Sciatic nerve (tissue), 2 donors: ENCODE measurements at regions of chr14 and their contacts with region 1.

Region 1: GRCh38 chr14:65772921-65773574 is 360.5 kb downstream of the FUT8 start:
- DNase-seq: no peak
- ATAC-seq: no peak

Region 2: GRCh38 chr14:65650826-65651225 is 122.2 kb before region 1 on chr14:
- intact Hi-C with region 1: no loop called
- DNase-seq: no peak
- ATAC-seq: no peak

Region 3: DNA sequence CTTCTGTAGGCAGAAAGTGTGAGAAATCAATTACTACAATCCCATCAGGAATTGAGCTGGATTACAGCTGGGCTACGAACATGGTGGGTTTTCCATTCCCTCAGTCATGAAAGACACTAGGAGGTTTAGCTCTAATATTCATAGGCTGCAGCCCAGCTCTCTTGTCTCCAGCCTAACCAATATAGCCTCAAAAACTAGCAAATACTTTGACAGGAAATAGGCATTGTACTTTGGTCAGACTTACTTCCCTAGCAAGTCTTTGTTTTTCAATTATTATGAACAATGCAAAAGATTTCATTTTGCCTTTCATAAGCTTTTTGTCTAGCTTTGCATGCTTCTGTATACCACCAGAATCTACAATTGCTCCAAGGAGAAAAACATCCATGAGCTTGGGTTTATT is 1031.1 kb after region 1 on chr14:
- intact Hi-C with region 1: no loop called
- DNase-seq: no peak
- ATAC-seq: no peak

Region 4: DNA sequence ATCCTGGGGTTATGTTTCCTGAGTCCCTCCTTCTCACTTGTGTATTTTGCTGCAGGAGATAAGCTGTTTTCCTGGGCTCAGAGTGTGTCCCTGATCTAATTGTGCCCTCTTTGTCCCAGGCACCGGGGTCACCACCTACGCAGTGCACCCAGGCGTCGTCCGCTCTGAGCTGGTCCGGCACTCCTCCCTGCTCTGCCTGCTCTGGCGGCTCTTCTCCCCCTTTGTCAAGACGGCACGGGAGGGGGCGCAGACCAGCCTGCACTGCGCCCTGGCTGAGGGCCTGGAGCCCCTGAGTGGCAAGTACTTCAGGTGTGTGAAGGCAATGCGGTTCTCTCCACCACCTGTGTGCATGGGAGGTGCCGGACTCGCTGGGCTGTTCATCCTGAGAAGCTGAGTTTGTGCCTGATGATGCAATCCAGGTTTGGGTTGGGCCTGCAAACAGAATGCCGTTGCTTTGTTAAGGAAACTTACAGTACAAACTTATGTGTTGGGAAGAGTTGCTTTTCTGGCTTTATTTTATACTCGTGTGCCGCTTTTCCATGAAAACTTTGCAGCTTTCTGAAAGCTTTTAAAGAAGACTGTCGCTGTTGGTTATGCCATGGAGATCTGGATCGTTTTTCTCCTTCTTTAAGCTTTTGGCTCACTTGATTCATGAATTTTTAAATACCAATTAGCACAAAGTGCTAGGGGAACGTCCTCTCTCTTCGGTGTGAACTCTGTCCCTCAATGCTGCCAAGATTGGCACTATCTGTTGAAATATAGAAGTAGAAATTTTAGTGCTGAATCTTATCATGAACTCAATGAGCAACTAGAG is 1956.2 kb after region 1 on chr14:
- intact Hi-C with region 1: loop called (anchors 5 kb)
- DNase-seq: no peak
- ATAC-seq: no peak